HEK293 (cell line): ENCODE measurements at regions of chr10 and their contacts with region 1.

Region 1: GRCh38 chr10:2122431-2123124 is 385.3 kb upstream of the ADARB2 start:
- H3K4me3 ChIP-seq: no peak overlapping the region
- H3K27ac ChIP-seq: no peak overlapping the region
- H3K4me1 ChIP-seq: no peaks in the 10 kb centered on the region
- CTCF ChIP-seq: no peak

Region 2: DNA sequence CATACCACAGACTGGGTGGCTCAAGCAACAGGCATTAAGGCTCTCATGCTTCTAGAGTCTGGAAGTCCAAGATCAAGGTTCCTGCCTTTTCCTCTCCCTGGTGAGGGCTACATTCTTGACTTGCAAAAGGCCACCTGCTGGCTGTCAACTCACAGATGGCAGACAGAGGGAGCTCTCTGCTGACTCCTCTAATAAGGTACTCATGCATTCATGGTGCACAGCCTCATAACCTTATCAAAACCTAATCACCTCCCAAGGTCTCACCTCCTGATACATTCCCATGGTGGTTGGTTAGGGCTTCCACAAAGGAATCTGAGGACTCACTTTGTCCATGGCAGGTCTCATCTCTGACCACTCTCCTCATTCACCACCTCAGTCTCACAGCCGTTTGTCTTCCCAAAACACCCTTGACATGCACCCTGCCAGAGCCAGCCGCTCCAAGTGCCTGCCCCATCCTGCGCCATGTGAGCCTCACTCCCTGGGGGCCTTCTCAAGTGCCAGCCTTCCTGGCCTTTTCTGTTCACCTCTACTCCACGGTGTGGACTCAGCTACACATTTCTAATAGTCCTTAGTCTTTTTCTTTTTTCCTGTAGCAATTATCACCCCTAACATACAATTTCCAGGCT is 15.1 kb after region 1 on chr10:
- CTCF ChIA-PET with region 1: interaction called, 11 read pairs
- POLR2A ChIA-PET with region 1: no interaction called
- H3K4me3 ChIP-seq: no peak overlapping the region
- H3K27ac ChIP-seq: no peak overlapping the region
- H3K4me1 ChIP-seq: no peaks in the 10 kb centered on the region
- CTCF ChIP-seq: no peak

Region 3: GRCh38 chr10:2202401-2202800 is 79.8 kb after region 1 on chr10:
- CTCF ChIA-PET with region 1: no interaction called
- POLR2A ChIA-PET with region 1: no interaction called
- H3K4me3 ChIP-seq: no peak overlapping the region
- H3K27ac ChIP-seq: no peak overlapping the region
- H3K4me1 ChIP-seq: no peaks in the 10 kb centered on the region
- CTCF ChIP-seq: no peak